Spleen (tissue), 13 donors: ENCODE measurements at regions of chr4 and their contacts with region 1.

Region 1: DNA sequence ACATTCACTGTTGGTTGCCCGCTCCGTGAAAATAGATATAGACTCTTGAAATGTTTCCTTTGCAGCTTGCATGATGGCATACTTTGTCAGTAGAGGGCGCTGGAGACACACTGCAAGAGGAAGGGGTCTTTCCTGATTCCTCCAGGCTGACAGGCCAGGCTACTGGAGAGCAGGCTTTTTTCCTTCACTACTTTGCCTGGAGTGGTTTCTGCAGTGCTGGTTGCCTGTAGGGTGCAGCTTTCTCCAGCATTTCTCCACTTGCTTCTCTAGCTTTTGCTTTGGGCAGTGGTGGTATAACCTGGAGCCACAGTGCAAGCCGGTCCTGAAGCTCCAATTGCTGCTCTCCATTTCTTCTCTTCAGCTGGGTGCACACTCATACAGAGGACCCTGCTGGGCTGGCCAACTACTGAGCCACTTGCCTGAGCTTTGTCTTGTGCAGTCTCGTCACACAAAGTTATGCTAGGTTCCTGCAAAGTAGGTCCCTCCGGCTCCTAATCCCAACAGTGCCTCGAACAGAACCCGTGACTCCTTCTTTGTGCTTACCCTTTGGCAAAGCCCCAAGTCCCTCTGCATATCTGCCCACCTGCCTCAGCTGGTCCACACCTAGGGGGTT is 46.3 kb downstream of the RASSF6 start:
- DNase-seq: no peak
- H3K4me3 ChIP-seq: no peak overlapping the region
- H3K27ac ChIP-seq: no peak overlapping the region
- H3K4me1 ChIP-seq: no peaks in the 10 kb centered on the region
- H3K27me3 ChIP-seq: no peaks in the 10 kb centered on the region
- CTCF ChIP-seq: peak; percentile 9 to 66 (median 50)
- POLR2A ChIP-seq: no peak

Region 2: GRCh38 chr4:73653695-73654106 is 79.8 kb after region 1 on chr4:
- intact Hi-C with region 1: loop called (anchors 10 kb)
- DNase-seq: no peak
- H3K4me3 ChIP-seq: no peak overlapping the region
- H3K27ac ChIP-seq: no peak overlapping the region
- H3K4me1 ChIP-seq: peaks cover 0 to 6% (median 0%) of the 10 kb centered on the region in 6 donors
- H3K27me3 ChIP-seq: peaks cover 0 to 5% (median 0%) of the 10 kb centered on the region in 7 donors
- CTCF ChIP-seq: peak in 8 of 11 experiments; percentile 6 to 52 (median 25)
- POLR2A ChIP-seq: no peak